ENCODE measurements at regions of chr12 and their contacts with region 1.

Region 1: GRCh38 chr12:2930865-2931264 is 28.3 kb upstream of the TEAD4 start:
- DNase-seq: no peak
- ATAC-seq: no peak
- H3K4me3 ChIP-seq: no peak overlapping the region
- H3K27ac ChIP-seq: no peak overlapping the region
- H3K4me1 ChIP-seq: no peaks in the 10 kb centered on the region
- H3K27me3 ChIP-seq: no peaks in the 10 kb centered on the region
- CTCF ChIP-seq: no peak
- EP300 ChIP-seq: no peak
- POLR2A ChIP-seq: no peak
- RAD21 ChIP-seq: no peak

Region 2: DNA sequence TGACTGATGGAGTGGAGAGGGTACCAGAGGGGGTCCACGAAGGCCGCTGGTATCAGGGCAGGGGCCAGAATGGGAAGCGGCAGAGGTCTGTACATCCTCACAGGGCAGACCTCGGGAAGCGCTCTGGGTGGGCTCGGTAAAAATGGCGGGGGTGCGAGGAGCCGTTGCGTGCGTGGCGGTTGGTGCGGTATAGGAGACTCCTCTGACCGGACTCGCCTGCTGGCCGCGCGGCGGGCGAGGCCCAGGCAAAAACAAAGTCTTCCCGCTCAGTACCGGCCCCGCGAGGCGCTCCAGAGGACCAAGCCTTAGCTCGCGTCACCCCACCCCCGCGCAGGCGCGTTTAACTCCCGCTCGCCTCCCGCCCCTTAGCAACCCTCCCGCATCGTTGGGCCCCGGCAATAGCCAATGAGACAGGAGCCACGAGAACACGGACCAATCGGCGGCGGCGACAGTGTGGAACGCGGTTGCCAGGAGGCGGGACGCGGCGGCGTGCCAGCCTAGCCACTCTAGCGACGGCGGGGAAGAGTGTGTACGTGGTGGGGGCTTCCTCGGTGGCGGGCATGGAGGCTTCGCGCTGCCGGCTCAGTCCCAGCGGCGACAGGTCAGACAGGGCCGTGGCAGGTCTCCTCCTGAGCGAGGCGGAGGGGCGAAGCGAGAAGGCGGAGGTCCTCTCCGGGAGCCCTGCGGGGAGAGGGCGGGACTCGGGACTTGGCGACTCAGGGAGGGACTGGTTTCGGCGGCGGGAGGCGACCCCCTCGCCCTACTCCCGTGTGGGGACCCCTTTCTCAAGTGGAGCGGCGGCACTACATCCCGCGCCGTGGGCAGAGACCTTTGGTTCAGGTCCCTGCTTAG is 40.3 kb before region 1 on chr12 and contains the start of gene TULP3:
- CTCF ChIA-PET with region 1: no interaction called
- POLR2A ChIA-PET with region 1: no interaction called
- RAD21 ChIA-PET with region 1: interaction called, 3 read pairs
- SMC1A ChIA-PET with region 1: no interaction called
- in situ Hi-C with region 1: no loop called
- intact Hi-C with region 1: loop called (anchors 5 kb)
- DNase-seq: peak; percentile 78
- ATAC-seq: peak; percentile 99
- H3K4me3 ChIP-seq: peak within 1 kb of the TSS; percentile 90
- H3K27ac ChIP-seq: peak within 1 kb of the TSS; percentile 76
- H3K4me1 ChIP-seq: peaks cover 4% of the 10 kb centered on the region
- H3K27me3 ChIP-seq: no peaks in the 10 kb centered on the region
- CTCF ChIP-seq: 0 out of 6 replicates have a peak, but pooled peaks of 1 of the 3 experiments have one; percentile 3
- EP300 ChIP-seq: no peak
- POLR2A ChIP-seq: peak; percentile 89
- RAD21 ChIP-seq: no peak
- polyA plus RNA-seq, gene TULP3: 3.1 to 3.9 TPM

Measured in GM12878 (cell line).